Astrocyte of the cerebellum (primary cell): ENCODE measurements at regions of chr11 and their contacts with region 1.

Region 1: GRCh38 chr11:61609980-61610366 is 29.1 kb upstream of the SYT7 start:
- DNase-seq: no peak
- H3K4me3 ChIP-seq: no peak overlapping the region
- CTCF ChIP-seq: peak; percentile 18

Region 2: DNA sequence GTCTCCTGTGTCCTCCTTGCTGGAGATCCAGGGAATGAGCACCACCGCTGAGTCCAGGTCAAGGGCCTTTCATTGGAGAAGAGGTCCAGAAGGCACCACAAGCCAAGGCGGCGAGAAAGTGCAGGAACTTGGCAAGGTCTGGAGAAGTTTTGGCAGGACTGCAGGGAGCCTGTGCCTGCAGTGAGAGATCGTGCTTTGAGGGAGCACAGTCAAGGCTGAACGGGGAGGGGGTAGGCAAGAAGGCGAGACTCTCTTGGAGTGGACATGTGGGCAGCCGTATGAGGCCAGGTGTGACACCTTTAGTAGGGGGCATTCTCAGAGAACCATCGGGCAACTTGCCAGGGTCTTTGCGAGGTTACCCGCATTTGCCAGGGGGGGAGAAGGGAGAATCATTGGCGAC is 71.0 kb before region 1 on chr11:
- in situ Hi-C with region 1: loop called (anchors 5 kb)
- DNase-seq: no peak
- H3K4me3 ChIP-seq: no peak overlapping the region
- CTCF ChIP-seq: no peak

Region 3: DNA sequence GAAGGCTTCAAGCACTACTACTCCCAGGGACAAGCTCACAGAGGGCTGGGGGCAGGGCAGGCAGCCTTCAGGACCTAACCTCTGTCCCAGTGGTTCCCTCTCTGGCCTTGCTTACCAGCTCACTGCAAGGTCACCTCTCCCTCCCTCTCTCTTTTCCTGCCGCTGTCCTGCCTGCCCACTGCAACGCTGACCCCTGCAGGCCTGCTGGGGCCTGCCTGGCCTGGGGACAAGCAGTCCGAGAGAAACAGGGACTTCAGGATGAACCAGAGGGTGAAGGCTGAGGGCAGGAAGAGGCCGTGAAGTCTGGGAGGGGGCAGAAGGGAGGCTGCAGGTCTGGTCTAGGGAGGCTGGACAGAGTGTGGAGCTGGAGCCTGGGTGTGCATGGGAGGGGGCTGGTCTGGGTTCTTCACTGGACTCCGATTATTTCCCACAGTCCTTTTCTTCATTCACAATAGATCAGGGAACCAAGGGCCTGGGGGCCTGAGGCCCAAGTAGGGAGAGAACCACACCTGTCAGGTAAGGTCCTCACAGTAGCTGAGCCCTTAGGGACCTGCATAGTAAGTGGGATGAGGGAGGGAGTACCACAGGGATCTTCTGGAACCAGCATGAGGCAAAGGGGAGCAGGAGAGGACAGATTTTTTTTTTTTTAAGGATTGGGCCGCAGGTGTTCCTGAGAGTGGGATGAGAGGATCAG is 32.1 kb before region 1 on chr11:
- in situ Hi-C with region 1: loop called (anchors 5 kb)
- DNase-seq: no peak
- H3K4me3 ChIP-seq: no peak overlapping the region
- CTCF ChIP-seq: peak; percentile 36